GM18951 (cell line): ENCODE measurements at regions of chr17 and their contacts with region 1.

Region 1: DNA sequence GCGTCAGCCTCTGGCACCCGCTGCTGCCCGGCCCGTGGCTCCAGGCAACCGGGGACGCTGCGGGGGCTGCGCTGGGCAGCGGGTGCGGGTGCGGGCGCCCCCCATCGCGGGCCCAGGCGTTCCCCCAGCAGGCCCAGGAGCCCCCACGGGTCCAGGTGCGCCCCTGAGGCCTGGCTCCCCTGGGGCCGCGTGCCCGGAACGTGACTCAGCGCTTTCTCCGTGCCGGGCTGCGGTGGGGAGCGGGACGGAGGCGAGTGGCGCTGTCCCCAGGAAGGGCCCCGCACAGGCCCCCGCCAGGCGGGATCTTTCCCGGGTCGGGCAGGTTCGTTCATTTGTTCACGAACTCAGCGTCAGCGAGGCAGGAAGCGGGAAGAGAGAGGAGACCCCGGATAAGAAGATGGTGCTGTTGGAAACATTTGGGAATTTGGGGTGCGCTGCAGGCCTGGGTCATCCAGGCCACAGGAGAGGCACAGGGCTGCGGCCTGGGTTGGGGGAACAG is 18.4 kb upstream of the EXOC7 start:
- POLR2A ChIP-seq: no peak

Region 2: GRCh38 chr17:75364078-75364477 is 757.9 kb before region 1 on chr17:
- in situ Hi-C with region 1: no loop called
- POLR2A ChIP-seq: no peak

Region 3: GRCh38 chr17:76182016-76182764 is 60.2 kb after region 1 on chr17:
- in situ Hi-C with region 1: loop called (anchors 5 kb)
- POLR2A ChIP-seq: peak; percentile 16

Region 4: GRCh38 chr17:76278952-76279741 is 157.2 kb after region 1 on chr17:
- in situ Hi-C with region 1: loop called (anchors 5 kb)
- POLR2A ChIP-seq: no peak

Region 5: GRCh38 chr17:76397687-76398487 is 275.9 kb after region 1 on chr17:
- in situ Hi-C with region 1: no loop called
- POLR2A ChIP-seq: no peak